ENCODE measurements at regions of chr15 and their contacts with region 1.

Region 1: DNA sequence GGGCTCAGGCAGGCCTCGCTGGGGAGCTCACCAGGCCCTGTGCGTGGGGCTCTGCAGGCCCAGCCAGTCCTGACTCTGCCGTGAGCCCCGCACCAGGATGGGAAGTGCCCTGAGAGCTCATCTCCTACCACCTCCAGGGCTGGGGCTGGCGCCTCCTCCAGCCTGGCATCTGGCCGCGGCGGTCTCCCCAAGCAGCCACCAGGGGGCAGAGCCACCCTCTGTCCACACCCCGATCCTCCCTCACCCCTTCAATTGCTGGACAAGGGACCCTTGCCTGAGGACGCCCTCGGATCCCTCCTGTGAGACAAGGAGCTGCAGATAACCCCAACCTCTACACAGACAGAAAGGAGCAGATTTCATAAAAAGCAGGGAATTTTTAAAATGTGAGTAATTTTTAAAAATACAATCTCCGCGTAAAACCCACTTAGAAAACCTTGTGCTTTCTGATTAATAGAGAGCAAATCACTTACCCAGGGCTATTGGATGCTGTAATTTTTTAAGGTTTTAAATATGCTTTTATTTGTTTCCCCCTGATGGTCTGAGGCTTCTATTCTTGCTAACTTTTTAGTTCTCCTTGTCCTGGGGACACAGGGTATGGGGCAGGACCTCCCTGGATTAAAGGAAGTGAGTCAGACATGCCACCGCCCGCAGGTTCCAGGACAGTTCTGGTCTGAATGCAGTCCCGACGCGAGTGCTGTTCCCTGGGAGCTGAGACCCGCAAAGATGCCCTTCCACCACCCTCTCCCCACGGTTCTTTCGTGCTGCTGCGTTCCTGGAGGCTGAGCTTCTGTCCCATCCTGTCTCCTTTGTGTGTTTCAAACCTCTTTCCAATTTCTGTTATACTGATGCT is 52.3 kb upstream of the CHRNA7 start:
- DNase-seq: peak; percentile 32
- ATAC-seq: peak; percentile 91
- H3K4me3 ChIP-seq: peak overlapping the region; percentile 26 to 39
- H3K27ac ChIP-seq: no peak overlapping the region
- H3K4me1 ChIP-seq: peaks cover 6 to 25% of the 10 kb centered on the region in 2 experiments
- H3K27me3 ChIP-seq: 0 out of 2 replicates have a peak, but pooled peaks cover 5% of the 10 kb centered on the region
- CTCF ChIP-seq: peak; percentile 68 to 92 (median 88)
- POLR2A ChIP-seq: no peak
- RAD21 ChIP-seq: peak; percentile 68

Region 2: GRCh38 chr15:31440754-31441311 is 537.2 kb before region 1 on chr15:
- CTCF ChIA-PET with region 1: interaction called, 3 read pairs
- POLR2A ChIA-PET with region 1: no interaction called
- RAD21 ChIA-PET with region 1: no interaction called
- intact Hi-C with region 1: loop called (anchors 5 kb)
- DNase-seq: no peak
- ATAC-seq: no peak
- H3K4me3 ChIP-seq: no peak overlapping the region
- H3K27ac ChIP-seq: no peak overlapping the region
- H3K4me1 ChIP-seq: peaks cover 5 to 14% of the 10 kb centered on the region in 2 experiments
- H3K27me3 ChIP-seq: no peaks in the 10 kb centered on the region
- CTCF ChIP-seq: no peak
- POLR2A ChIP-seq: no peak
- RAD21 ChIP-seq: no peak

Region 3: GRCh38 chr15:31660816-31661215 is 317.2 kb before region 1 on chr15:
- CTCF ChIA-PET with region 1: no interaction called
- POLR2A ChIA-PET with region 1: no interaction called
- RAD21 ChIA-PET with region 1: no interaction called
- intact Hi-C with region 1: loop called (anchors 10 kb)
- DNase-seq: no peak
- ATAC-seq: no peak
- H3K4me3 ChIP-seq: no peak overlapping the region
- H3K27ac ChIP-seq: no peak overlapping the region
- H3K4me1 ChIP-seq: no peaks in the 10 kb centered on the region
- H3K27me3 ChIP-seq: no peaks in the 10 kb centered on the region
- CTCF ChIP-seq: no peak
- POLR2A ChIP-seq: no peak
- RAD21 ChIP-seq: no peak

Region 4: DNA sequence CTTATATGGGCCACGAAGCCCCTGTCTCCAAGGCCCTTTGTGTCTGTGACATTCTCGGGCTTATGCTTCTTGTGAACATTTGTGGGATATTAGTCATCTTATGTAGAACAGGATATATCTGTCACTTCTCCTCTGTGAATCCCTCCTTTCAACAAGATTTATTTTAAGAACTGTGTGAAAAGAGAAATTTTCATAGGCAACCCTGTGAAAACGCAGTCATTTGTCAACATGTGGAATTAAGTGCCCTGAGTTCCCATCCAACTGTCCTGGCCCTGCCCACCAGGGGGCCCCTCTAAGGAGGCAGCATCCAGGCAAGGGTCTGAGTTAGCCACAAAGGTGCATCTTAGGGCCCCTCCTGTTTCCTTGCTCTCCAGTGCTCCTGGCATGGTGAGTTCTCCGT is 24.6 kb before region 1 on chr15:
- CTCF ChIA-PET with region 1: no interaction called
- POLR2A ChIA-PET with region 1: no interaction called
- RAD21 ChIA-PET with region 1: no interaction called
- intact Hi-C with region 1: no loop called
- DNase-seq: no peak
- ATAC-seq: no peak; the same call in 1 of the 2 replicates
- H3K4me3 ChIP-seq: no peak overlapping the region
- H3K27ac ChIP-seq: no peak overlapping the region
- H3K4me1 ChIP-seq: no peaks in the 10 kb centered on the region
- H3K27me3 ChIP-seq: 0 out of 2 replicates have a peak, but pooled peaks cover 3% of the 10 kb centered on the region
- CTCF ChIP-seq: peak in 2 of 3 experiments; percentile 27 to 28; a peak in 3 of 6 replicates
- POLR2A ChIP-seq: no peak
- RAD21 ChIP-seq: no peak

Measured in HCT116 (cell line).